ENCODE measurements at regions of chr9 and their contacts with region 1.

Region 1: GRCh38 chr9:34546834-34547827 is 24.3 kb upstream of the ENHO start:
- DNase-seq: peak; percentile 70 to 84 (median 78)
- H3K4me3 ChIP-seq: no peak overlapping the region
- H3K27ac ChIP-seq: peak overlapping the region in 26 of 59 donors; percentile 1 to 71 (median 32)
- H3K27me3 ChIP-seq: no peaks in the 10 kb centered on the region
- CTCF ChIP-seq: peak; percentile 31 to 92 (median 82)

Region 2: GRCh38 chr9:34139477-34140146 is 407.5 kb before region 1 on chr9:
- intact Hi-C with region 1: no loop called
- DNase-seq: peak in 1 of 10 donors; percentile 42
- H3K4me3 ChIP-seq: no peak overlapping the region
- H3K27ac ChIP-seq: no peak overlapping the region
- H3K27me3 ChIP-seq: no peaks in the 10 kb centered on the region
- CTCF ChIP-seq: peak in 34 of 56 donors; percentile 11 to 58 (median 32)

Region 3: DNA sequence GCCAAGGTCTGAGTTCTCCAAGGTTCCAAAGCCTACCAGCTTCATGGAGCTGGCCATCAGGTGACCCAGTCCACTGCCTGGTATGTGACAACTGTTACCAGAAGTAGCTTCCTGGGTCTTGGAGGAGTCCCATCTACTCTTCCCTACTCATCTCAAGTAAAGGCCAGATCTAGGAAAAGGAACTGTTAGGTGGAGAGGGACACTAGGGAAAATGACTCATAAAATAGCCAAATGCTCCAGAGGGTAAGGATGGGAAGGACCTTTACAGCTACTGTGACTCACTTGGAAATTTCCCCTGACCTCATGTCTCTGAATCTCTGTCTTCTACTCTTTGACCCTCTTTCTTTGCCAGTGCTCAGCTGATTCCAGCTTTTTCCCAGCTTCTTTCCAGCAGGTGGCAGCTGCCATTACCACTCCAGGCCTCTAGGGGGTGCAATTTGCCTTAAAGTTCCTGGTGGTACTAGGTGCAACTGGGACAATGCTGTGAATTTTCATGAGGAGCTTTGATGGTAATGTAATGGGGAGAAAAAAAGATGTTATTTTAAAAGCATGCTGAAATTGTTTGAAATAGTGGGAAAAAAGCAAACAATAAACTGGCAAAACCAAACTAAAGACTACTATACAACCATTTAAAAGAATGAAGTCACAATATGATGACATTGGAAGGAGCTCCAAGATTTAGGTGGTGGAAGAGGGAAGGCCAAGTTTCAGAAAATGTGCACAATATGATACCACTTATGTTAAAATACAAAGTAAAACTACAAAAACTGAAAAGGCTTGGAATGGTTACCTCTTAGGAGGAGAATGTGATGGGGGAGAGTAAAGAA is 143.4 kb before region 1 on chr9:
- intact Hi-C with region 1: loop called (anchors 2 to 5 kb)
- DNase-seq: peak; percentile 67 to 87 (median 75)
- H3K4me3 ChIP-seq: no peak overlapping the region
- H3K27ac ChIP-seq: peak overlapping the region in 1 of 59 donors; percentile 4
- H3K27me3 ChIP-seq: no peaks in the 10 kb centered on the region
- CTCF ChIP-seq: peak; percentile 83 to 100 (median 98)

Region 4: DNA sequence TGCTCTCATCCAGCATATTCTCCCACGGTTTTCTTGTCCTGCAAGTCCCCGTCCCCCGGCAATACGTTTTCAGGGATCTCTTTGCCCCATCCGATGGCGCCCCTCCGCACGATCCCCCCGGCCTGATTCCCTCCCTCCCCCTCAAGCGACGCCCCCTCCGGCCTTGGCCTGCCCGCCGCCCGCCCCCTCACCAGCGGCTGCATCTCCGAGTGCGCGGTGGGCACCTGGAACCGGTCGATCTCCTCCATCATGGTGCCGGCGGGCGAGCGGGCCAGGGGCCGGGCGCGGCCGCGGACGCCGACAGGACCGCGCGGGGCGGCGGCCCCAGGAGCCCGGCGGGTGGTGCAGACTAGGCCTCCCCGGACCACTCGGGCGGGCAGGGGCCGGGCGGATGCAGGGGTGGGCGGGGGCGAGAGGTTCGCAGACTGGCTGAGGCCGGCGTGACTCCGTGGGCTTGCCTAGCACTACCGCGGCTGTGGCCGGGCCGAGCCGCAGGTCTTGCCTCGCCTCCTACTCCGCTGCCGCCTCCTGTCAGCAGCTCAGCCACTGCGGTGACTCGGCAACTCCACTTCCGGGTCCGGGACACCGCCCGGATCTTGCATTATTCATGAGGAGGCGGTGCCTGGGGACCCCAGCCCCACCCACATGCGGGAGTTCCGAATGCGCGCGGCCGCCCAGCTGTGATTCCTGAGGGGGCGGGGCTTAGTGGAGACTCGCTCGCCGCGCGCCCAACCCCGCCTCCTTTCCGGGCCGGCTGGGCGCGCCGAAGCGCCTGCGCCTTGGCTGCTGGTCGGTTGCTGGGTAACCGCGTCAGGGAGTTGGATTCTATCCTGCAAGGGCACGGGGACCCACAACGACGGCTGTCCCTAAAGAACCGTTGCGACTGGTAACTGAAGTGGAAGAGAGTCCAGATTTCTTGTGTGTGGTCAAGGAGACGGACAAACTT is 88.8 kb before region 1 on chr9 and contains the starts of genes DNAI1 and FAM219A:
- intact Hi-C with region 1: loop called in 1 of 2 experiments (anchors 5 kb)
- DNase-seq: peak; percentile 98 to 100 (median 99)
- H3K4me3 ChIP-seq: peak within 1 kb of the TSS; percentile 54 to 96 (median 83)
- H3K27ac ChIP-seq: peak within 1 kb of the TSS in 57 of 59 donors; percentile 3 to 92 (median 73)
- H3K27me3 ChIP-seq: no peaks in the 10 kb centered on the region
- CTCF ChIP-seq: peak in 26 of 56 donors; percentile 5 to 58 (median 28)
- total RNA-seq, gene DNAI1: 1.0 to 11.2 (median 4.2) TPM
- total RNA-seq, gene FAM219A: 93.3 to 167 (median 131) TPM

Region 5: GRCh38 chr9:34493972-34494535 is 53.1 kb before region 1 on chr9:
- intact Hi-C with region 1: no loop called
- DNase-seq: no peak
- H3K4me3 ChIP-seq: no peak overlapping the region
- H3K27ac ChIP-seq: no peak overlapping the region
- H3K27me3 ChIP-seq: no peaks in the 10 kb centered on the region
- CTCF ChIP-seq: no peak

Region 6: GRCh38 chr9:34522971-34523797 is 23.9 kb before region 1 on chr9 and contains the start of gene ENHO:
- intact Hi-C with region 1: loop called in 1 of 2 experiments (anchors 1 kb)
- DNase-seq: peak; percentile 77 to 95 (median 88)
- H3K4me3 ChIP-seq: peak within 1 kb of the TSS; percentile 41 to 79 (median 68)
- H3K27ac ChIP-seq: peak within 1 kb of the TSS in 57 of 59 donors; percentile 28 to 94 (median 80)
- H3K27me3 ChIP-seq: no peaks in the 10 kb centered on the region
- CTCF ChIP-seq: peak in 26 of 56 donors; percentile 8 to 54 (median 22)
- total RNA-seq, gene ENHO: 56.2 to 336 (median 124) TPM

Region 7: GRCh38 chr9:34603610-34604231 is 56.6 kb after region 1 on chr9:
- intact Hi-C with region 1: loop called in 1 of 2 experiments (anchors 2 kb)
- DNase-seq: peak; percentile 84 to 94 (median 90)
- H3K4me3 ChIP-seq: no peak overlapping the region
- H3K27ac ChIP-seq: no peak overlapping the region
- H3K27me3 ChIP-seq: no peaks in the 10 kb centered on the region
- CTCF ChIP-seq: peak; percentile 80 to 98 (median 94)

Region 8: GRCh38 chr9:34620061-34620994 is 73.2 kb after region 1 on chr9 and contains the start of gene DCTN3:
- intact Hi-C with region 1: no loop called
- DNase-seq: peak; percentile 92 to 99 (median 96)
- H3K4me3 ChIP-seq: peak within 1 kb of the TSS; percentile 63 to 100 (median 90)
- H3K27ac ChIP-seq: peak within 1 kb of the TSS in 22 of 59 donors; percentile 1 to 86 (median 31)
- H3K27me3 ChIP-seq: peaks cover 0 to 32% (median 19%) of the 10 kb centered on the region in 45 donors
- CTCF ChIP-seq: peak in 45 of 56 donors; percentile 6 to 67 (median 37)
- total RNA-seq, gene DCTN3: 83.5 to 180 (median 139) TPM

Region 9: DNA sequence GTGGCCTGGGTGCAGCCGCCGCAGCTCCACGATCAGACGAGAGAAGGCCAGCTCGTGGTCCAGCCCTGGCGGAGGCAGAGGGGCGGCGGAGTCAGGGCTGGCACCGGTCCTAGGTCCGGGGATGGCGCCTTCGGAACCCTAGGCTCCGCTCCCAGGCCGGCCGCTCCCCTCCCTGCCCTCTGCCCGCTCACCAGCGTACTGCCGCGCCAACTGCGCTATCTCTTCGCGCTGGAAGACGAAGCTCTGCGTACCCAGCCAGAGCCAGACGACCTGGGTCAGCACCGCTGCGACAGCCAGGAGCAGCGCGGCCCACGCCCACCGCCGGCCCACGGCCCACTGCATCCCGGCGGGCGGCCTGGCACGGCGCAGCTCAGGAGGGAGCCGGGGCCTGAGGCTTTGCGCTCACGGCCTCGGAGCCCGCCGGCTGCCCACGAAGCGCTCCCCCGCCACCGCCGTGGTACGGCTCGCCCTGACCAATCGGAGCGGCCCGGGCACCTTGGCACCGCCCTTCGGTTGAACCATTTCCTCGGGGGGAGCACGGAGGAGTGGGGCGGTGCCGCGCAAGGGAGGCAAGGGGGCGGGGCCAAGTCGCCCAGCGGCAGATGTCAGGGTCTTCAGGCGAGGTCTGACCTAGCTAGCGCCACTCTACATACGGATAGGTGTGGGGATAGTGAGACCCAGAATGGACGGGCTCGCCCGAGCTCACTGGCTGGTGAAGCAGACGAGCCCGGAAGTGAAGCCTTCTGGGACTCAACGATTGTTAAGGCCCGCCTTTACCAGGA is 90.4 kb after region 1 on chr9 and contains the start of gene SIGMAR1:
- intact Hi-C with region 1: no loop called
- DNase-seq: peak; percentile 89 to 98 (median 94)
- H3K4me3 ChIP-seq: peak within 1 kb of the TSS; percentile 58 to 99 (median 84)
- H3K27ac ChIP-seq: peak within 1 kb of the TSS in 58 of 59 donors; percentile 53 to 97 (median 91)
- H3K27me3 ChIP-seq: no peaks in the 10 kb centered on the region
- CTCF ChIP-seq: peak in 34 of 56 donors; percentile 6 to 62 (median 31)
- total RNA-seq, gene SIGMAR1: 26.3 to 48.1 (median 36.0) TPM